ENCODE measurements at regions of chr2 and their contacts with region 1.

Region 1: GRCh38 chr2:85282914-85283313 is 44.9 kb downstream of the TGOLN2 start:
- DNase-seq: peak in 1 of 2 donors; percentile 8
- ATAC-seq: no peak

Region 2: GRCh38 chr2:85143463-85144082 is 139.3 kb before region 1 on chr2:
- intact Hi-C with region 1: loop called in 1 of 2 experiments (anchors 5 kb)
- DNase-seq: no peak
- ATAC-seq: peak; percentile 30

Region 3: DNA sequence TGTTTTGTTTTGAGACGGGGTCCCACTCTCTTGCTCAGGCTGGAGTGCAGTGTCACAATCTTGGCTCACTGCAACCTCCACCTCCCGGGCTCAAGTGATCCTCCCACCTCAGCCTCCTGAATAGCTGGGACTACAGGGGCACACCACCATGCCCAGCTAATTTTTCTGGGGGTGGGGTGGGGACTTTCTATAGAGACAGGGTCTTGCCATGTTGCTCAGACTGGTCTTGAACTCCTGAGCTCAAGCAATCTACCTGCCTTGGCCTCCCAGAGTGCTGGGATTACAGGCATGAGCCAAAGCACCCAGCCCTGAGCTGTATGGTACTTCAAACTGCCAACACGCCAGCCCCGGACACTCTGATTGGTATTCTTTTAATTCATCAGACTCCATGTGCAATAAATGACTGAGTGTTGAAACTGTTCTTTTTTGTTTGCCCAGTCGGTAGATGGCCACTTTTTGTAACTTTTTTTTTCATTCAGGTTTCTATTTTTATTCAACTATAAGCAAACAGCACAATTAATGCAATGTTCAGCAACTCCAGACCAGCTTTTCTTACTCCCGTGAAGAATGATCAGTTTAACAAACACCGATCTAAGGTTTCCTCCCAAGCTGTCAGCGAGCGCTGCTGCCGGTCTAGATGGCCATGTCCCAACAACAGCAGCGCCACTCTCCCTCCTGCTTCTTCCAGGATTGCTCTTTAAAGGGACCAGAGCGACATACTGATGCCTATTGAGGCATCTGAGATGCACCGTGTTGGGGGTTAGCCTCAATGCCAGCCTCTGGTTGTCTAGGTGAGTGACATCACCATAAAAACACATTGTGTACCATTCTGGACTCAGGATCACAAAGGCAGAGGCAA is 57.3 kb after region 1 on chr2:
- intact Hi-C with region 1: no loop called
- DNase-seq: no peak
- ATAC-seq: peak; percentile 31